Mammary epithelial cell (primary cell): ENCODE measurements at regions of chr15 and their contacts with region 1.

Region 1: DNA sequence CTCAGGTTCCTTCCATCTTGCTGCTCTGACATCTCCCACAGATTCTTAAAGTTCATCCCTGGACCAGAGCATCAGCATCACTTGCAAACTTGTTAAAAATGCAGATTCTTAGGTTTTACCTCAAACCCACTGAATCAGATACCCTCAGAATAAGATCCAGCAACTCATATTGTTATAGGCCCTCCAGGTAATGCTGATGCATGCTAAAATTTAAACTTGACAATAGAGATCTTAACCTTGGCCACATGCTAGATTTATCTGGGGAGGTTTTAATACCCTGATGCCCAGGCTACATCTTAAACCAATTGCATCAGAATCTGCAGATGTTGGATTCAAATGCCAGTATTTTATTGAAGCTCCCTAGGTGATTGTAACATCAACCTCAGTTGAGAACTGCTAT is 256.9 kb downstream of the RYR3 start:
- DNase-seq: no peak
- H3K4me3 ChIP-seq: no peak overlapping the region
- H3K27ac ChIP-seq: no peak overlapping the region
- H3K4me1 ChIP-seq: no peaks in the 10 kb centered on the region
- H3K27me3 ChIP-seq: no peaks in the 10 kb centered on the region
- CTCF ChIP-seq: no peak

Region 2: GRCh38 chr15:33584797-33585196 is 17.1 kb after region 1 on chr15:
- CTCF ChIA-PET with region 1: interaction called, 13 read pairs
- dilution Hi-C with region 1: no loop called
- in situ Hi-C with region 1: no loop called
- intact Hi-C with region 1: no loop called
- DNase-seq: peak; percentile 69
- H3K4me3 ChIP-seq: no peak overlapping the region
- H3K27ac ChIP-seq: no peak overlapping the region
- H3K4me1 ChIP-seq: peaks cover 15% of the 10 kb centered on the region
- H3K27me3 ChIP-seq: no peaks in the 10 kb centered on the region
- CTCF ChIP-seq: no peak

Region 3: DNA sequence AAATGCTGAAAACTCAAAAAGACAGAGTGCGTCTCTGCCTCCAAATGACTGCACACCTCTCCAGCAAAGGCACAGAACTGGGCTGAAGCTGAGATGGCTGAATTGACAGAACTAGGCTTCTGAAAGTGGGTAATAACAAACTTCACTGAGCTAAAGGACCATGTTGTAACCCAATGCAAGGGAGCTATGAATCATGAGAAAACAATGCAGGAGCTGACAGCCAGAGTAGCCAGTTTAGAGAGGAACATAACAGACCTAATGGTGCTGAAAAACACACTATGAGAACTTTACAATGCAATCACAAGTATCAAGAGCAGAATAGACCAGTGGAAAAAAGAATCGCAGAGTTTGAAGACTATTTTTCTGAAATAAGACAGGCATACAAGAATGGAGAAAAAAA is 481.5 kb after region 1 on chr15:
- CTCF ChIA-PET with region 1: no interaction called
- dilution Hi-C with region 1: no loop called
- in situ Hi-C with region 1: no loop called
- intact Hi-C with region 1: no loop called
- DNase-seq: peak; percentile 50
- H3K4me3 ChIP-seq: no peak overlapping the region
- H3K27ac ChIP-seq: no peak overlapping the region
- H3K4me1 ChIP-seq: peaks cover 15% of the 10 kb centered on the region
- H3K27me3 ChIP-seq: no peaks in the 10 kb centered on the region
- CTCF ChIP-seq: no peak